ENCODE measurements at regions of chr11 and their contacts with region 1.

Region 1: DNA sequence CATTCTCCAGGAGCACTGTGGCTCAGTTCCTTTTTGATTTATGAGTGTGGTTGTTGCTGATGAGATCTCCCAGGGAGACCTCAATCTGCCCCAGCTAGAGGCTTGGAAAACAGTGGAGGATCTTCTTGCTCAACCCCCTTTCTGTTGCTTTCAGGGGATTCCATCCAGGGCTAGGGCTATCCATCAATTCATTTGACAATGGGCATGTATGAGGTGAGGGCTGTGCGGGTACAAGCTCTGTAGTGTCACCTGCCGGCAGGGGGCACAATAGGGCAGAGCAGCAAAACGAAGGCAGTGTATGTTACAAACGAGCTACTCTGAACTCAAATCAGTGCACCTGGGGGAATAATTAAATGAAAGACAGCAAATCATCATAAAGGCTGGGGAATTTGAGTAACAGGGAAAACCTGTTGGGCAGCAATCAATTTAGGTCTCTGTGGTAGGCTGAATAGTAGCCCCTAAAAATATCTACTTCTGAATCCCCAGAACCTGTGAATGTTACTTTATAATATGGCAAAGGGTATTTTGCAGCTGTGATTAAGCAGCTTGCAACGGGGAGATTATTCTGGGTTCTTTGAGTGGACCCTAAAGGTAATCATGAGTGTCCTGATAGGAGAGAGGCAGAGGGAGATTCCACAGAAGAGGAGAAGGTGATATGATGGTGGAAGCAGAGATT is 170.3 kb upstream of the ZBED5 start:
- DNase-seq: peak; percentile 86
- ATAC-seq: peak; percentile 99
- H3K4me3 Mint-ChIP-seq: no peak overlapping the region
- H3K27ac Mint-ChIP-seq: no peak overlapping the region
- H3K4me1 Mint-ChIP-seq: 0 out of 2 replicates have a peak, but pooled peaks cover 2% of the 10 kb centered on the region
- H3K27me3 Mint-ChIP-seq: no peaks in the 10 kb centered on the region; the same call in 1 of the 2 replicates
- CTCF ChIP-seq: peak; percentile 75

Region 2: GRCh38 chr11:10725114-10725906 is 302.8 kb before region 1 on chr11:
- CTCF ChIA-PET with region 1: no interaction called
- POLR2A ChIA-PET with region 1: no interaction called
- DNase-seq: no peak
- ATAC-seq: no peak
- H3K4me3 Mint-ChIP-seq: no peak overlapping the region
- H3K27ac Mint-ChIP-seq: no peak overlapping the region
- H3K4me1 Mint-ChIP-seq: peaks cover 4% of the 10 kb centered on the region
- H3K27me3 Mint-ChIP-seq: no peaks in the 10 kb centered on the region; the same call in 1 of the 2 replicates
- CTCF ChIP-seq: no peak

Region 3: GRCh38 chr11:10770626-10771254 is 257.4 kb before region 1 on chr11:
- CTCF ChIA-PET with region 1: interaction called, 13 read pairs
- POLR2A ChIA-PET with region 1: no interaction called
- DNase-seq: peak; percentile 61
- ATAC-seq: peak; percentile 41; the same call in 1 of the 2 replicates
- H3K4me3 Mint-ChIP-seq: no peak overlapping the region
- H3K27ac Mint-ChIP-seq: no peak overlapping the region
- H3K4me1 Mint-ChIP-seq: peaks cover 12% of the 10 kb centered on the region
- H3K27me3 Mint-ChIP-seq: no peaks in the 10 kb centered on the region
- CTCF ChIP-seq: peak; percentile 38

Region 4: GRCh38 chr11:10993186-10993585 is 35.0 kb before region 1 on chr11:
- CTCF ChIA-PET with region 1: no interaction called
- POLR2A ChIA-PET with region 1: no interaction called
- DNase-seq: no peak
- ATAC-seq: no peak
- H3K4me3 Mint-ChIP-seq: no peak overlapping the region
- H3K27ac Mint-ChIP-seq: no peak overlapping the region
- H3K4me1 Mint-ChIP-seq: peaks cover under 1% of the 10 kb centered on the region; the same call in 1 of the 2 replicates
- H3K27me3 Mint-ChIP-seq: no peaks in the 10 kb centered on the region; the same call in 1 of the 2 replicates
- CTCF ChIP-seq: no peak

Region 5: GRCh38 chr11:11010624-11011127 is 17.5 kb before region 1 on chr11:
- CTCF ChIA-PET with region 1: interaction called, 15 read pairs
- POLR2A ChIA-PET with region 1: no interaction called
- DNase-seq: peak; percentile 47
- ATAC-seq: peak; percentile 92
- H3K4me3 Mint-ChIP-seq: peak overlapping the region; percentile 38
- H3K27ac Mint-ChIP-seq: no peak overlapping the region
- H3K4me1 Mint-ChIP-seq: peaks cover 21% of the 10 kb centered on the region
- H3K27me3 Mint-ChIP-seq: peaks cover 5% of the 10 kb centered on the region
- CTCF ChIP-seq: no peak

Region 6: GRCh38 chr11:11078344-11079086 is 50.4 kb after region 1 on chr11:
- CTCF ChIA-PET with region 1: interaction called, 23 read pairs
- POLR2A ChIA-PET with region 1: no interaction called
- DNase-seq: no peak
- ATAC-seq: peak; percentile 33
- H3K4me3 Mint-ChIP-seq: no peak overlapping the region
- H3K27ac Mint-ChIP-seq: no peak overlapping the region
- H3K4me1 Mint-ChIP-seq: peaks cover 70% of the 10 kb centered on the region
- H3K27me3 Mint-ChIP-seq: peaks cover 7% of the 10 kb centered on the region
- CTCF ChIP-seq: no peak

Region 7: DNA sequence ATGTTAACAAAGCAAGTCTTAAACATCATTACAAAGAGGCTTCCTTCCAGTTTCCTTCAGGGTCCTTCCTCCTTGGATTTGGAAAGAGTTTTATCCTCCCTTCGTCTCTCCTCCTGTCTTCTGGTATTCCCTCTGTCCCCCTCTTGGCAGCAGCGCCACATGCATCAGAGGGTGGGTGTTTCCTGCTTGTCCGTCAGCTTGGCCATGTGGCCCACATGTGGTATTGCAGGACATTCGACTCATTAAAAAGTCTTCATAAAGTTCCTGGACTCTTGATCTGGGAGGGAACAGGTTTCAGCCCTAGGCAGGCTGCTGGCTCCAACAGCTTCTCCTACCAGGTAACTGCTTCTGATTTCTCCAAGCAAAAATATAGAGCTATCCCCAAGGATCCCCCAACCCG is 135.1 kb after region 1 on chr11:
- CTCF ChIA-PET with region 1: interaction called, 11 read pairs
- POLR2A ChIA-PET with region 1: no interaction called
- DNase-seq: no peak
- ATAC-seq: peak; percentile 93
- H3K4me3 Mint-ChIP-seq: no peak overlapping the region
- H3K27ac Mint-ChIP-seq: no peak overlapping the region
- H3K4me1 Mint-ChIP-seq: no peaks in the 10 kb centered on the region
- H3K27me3 Mint-ChIP-seq: peaks cover 27% of the 10 kb centered on the region
- CTCF ChIP-seq: no peak

Region 8: GRCh38 chr11:11217929-11218628 is 189.9 kb after region 1 on chr11:
- CTCF ChIA-PET with region 1: interaction called, 11 read pairs
- POLR2A ChIA-PET with region 1: no interaction called
- DNase-seq: no peak
- ATAC-seq: no peak
- H3K4me3 Mint-ChIP-seq: no peak overlapping the region
- H3K27ac Mint-ChIP-seq: no peak overlapping the region
- H3K4me1 Mint-ChIP-seq: peaks cover 18% of the 10 kb centered on the region
- H3K27me3 Mint-ChIP-seq: peaks cover 3% of the 10 kb centered on the region; the same call in 1 of the 2 replicates
- CTCF ChIP-seq: no peak

Region 9: GRCh38 chr11:11787305-11788062 is 759.3 kb after region 1 on chr11:
- CTCF ChIA-PET with region 1: interaction called, 39 read pairs
- POLR2A ChIA-PET with region 1: no interaction called
- DNase-seq: peak; percentile 79
- ATAC-seq: peak; percentile 94
- H3K4me3 Mint-ChIP-seq: no peak overlapping the region
- H3K27ac Mint-ChIP-seq: no peak overlapping the region
- H3K4me1 Mint-ChIP-seq: peaks cover 14% of the 10 kb centered on the region
- H3K27me3 Mint-ChIP-seq: no peaks in the 10 kb centered on the region
- CTCF ChIP-seq: peak; percentile 81